ENCODE measurements at regions of chr6 and their contacts with region 1.

Region 1: GRCh38 chr6:27893059-27893835 is 18.9 kb downstream of the OR2B2 start:
- DNase-seq: peak; percentile 91
- ATAC-seq: peak; percentile 46
- H3K4me3 Mint-ChIP-seq: no peak overlapping the region
- H3K27ac Mint-ChIP-seq: peak overlapping the region; percentile 99
- H3K4me1 Mint-ChIP-seq: peaks cover 42% of the 10 kb centered on the region
- H3K27me3 Mint-ChIP-seq: no peaks in the 10 kb centered on the region; the same call in 1 of the 2 replicates
- CTCF ChIP-seq: no peak

Region 2: DNA sequence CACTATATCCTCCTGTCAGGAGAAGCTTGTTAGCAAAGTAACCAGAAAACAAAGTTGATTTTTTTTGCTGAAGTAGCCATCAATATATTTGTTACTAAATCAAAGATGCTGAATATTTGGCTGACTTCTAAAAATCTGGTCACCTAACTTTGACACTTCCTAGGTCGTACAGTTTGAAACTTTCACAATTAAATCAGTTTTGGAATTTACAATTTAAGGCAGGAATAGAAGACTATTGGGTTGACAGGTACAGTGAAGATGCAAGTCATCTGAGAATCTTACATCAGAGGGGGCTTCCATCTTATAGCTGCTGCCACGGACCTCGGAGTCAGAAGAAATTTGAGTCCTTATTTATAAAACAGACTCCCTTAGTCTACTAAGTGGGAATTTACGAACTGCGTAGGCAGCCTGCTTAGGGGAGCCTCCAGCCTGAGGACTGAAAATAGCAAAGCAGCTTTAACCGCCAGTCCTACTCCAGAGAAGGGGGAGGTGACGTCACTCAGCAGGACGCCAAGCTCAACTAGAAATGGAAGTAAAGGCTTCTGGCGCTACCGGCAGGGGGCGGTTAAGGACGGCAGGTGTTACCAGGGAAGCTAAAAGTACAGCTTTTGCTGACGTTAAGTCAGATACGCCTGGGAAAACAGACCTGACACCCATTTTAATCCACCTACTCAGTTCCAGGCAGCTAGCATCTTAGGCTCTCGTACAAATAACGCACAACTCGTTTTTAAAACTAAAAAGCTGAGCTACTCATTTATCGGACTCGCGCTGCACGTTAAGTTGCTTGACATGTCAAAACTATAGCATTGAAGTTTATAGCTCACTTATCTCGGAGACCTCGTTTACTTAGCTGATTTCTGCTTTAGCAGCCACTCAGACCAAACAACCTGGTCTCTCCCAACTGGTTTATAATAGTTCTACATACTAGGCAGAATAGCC is 1867.1 kb before region 1 on chr6:
- CTCF ChIA-PET with region 1: no interaction called
- POLR2A ChIA-PET with region 1: interaction called, 25 read pairs
- DNase-seq: peak; percentile 95
- ATAC-seq: peak; percentile 12
- H3K4me3 Mint-ChIP-seq: peak overlapping the region; percentile 92
- H3K27ac Mint-ChIP-seq: peak overlapping the region; percentile 98
- H3K4me1 Mint-ChIP-seq: peaks cover 73% of the 10 kb centered on the region
- H3K27me3 Mint-ChIP-seq: no peaks in the 10 kb centered on the region
- CTCF ChIP-seq: peak; percentile 60

Region 3: DNA sequence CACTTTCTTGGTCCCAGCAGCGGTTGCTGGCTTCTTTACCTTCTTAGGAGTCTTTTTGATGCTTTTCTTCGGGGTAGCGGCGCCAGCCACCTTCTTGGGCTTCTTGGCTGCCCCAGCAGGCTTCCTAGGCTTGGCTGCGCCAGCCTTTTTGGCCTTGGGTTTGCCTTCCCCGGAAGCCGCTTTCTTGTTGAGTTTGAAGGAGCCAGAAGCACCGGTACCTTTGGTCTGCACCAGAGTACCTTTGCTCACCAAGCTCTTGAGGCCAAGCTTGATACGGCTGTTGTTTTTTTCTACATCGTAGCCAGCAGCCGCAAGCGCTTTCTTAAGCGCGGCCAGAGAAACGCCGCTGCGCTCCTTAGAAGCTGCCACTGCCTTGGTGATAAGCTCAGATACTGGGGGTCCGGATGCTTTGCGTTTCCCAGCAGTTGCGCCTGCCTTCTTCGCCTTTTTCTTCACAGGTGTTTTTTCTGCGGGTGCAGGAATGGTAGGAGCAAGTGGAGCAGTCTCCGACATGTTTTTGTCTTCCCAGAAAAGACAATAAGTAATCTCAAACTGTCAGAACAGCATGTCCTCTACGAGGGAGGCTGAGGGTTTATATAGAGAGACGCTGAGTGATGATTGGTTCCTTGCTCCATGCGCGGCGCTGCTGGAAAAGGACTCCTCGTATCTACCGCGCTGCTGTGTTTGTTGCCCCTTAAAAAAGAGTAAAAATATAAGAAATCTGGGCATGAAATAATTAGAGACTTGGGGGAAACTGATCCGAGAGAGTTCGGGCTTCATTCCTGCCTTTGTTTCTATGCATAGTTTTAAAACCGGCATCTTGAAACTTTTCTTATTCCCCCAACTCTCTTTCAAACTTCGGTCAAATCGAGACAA is 1658.6 kb before region 1 on chr6:
- CTCF ChIA-PET with region 1: no interaction called
- POLR2A ChIA-PET with region 1: interaction called, 12 read pairs
- DNase-seq: no peak
- ATAC-seq: peak; percentile 70
- H3K4me3 Mint-ChIP-seq: peak overlapping the region; percentile 94
- H3K27ac Mint-ChIP-seq: peak overlapping the region; percentile 99
- H3K4me1 Mint-ChIP-seq: peaks cover 33% of the 10 kb centered on the region
- H3K27me3 Mint-ChIP-seq: no peaks in the 10 kb centered on the region
- CTCF ChIP-seq: no peak

Region 4: GRCh38 chr6:27138837-27139755 is 754.2 kb before region 1 on chr6:
- CTCF ChIA-PET with region 1: no interaction called
- POLR2A ChIA-PET with region 1: interaction called, 79 read pairs
- DNase-seq: peak; percentile 77
- ATAC-seq: peak; percentile 70
- H3K4me3 Mint-ChIP-seq: peak overlapping the region; percentile 97
- H3K27ac Mint-ChIP-seq: peak overlapping the region; percentile 99
- H3K4me1 Mint-ChIP-seq: peaks cover 59% of the 10 kb centered on the region
- H3K27me3 Mint-ChIP-seq: no peaks in the 10 kb centered on the region
- CTCF ChIP-seq: no peak

Region 5: GRCh38 chr6:27838058-27838944 is 54.9 kb before region 1 on chr6:
- CTCF ChIA-PET with region 1: interaction called, 8 read pairs
- POLR2A ChIA-PET with region 1: interaction called, 300 read pairs
- DNase-seq: peak; percentile 84
- ATAC-seq: peak; percentile 84
- H3K4me3 Mint-ChIP-seq: no peak overlapping the region
- H3K27ac Mint-ChIP-seq: no peak overlapping the region
- H3K4me1 Mint-ChIP-seq: peaks cover 28% of the 10 kb centered on the region
- H3K27me3 Mint-ChIP-seq: no peaks in the 10 kb centered on the region
- CTCF ChIP-seq: no peak

Region 6: DNA sequence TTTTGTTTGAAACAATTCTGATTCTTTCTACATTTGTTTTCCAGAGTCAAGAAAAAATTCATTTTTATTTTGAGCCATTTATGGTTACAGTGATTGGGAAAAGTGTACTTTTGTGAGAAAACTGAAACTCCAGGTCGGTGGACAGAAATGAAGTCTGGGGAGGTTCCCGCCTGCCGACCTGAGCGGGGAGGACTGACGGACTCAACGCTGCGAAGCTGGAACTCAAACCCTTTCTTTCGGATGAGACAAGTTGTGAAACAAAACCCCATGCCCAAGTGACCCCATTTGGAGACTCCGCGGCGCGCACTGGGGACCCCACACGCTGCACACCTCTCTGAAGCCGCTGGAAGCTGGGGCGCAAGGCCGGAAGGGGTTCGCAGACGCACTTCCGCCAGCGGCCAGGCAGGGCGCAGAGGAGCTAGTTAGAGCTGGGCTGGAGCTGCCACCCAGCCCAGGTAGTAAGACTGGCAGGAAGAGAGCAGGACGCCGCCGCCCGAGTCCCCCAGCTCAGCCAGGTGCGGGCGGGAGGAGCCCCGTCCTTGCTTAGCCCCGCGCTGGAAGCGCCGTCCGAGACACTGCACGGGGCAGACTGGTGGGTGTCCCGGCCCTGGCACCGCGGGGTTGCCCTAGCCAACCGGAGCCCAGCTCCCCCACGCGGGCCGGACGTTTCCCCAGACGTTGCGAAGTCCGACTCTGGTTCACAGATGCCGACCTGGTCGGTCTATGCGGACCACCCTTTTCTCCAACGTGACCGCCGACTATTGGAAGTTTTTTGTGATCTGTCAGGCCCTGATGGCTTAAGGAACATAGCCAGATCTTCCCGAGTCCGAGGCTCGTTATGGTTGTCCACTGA is 211.4 kb after region 1 on chr6:
- CTCF ChIA-PET with region 1: interaction called, 3 read pairs
- POLR2A ChIA-PET with region 1: interaction called, 12 read pairs
- DNase-seq: peak; percentile 92
- ATAC-seq: peak; percentile 99
- H3K4me3 Mint-ChIP-seq: peak overlapping the region; percentile 78
- H3K27ac Mint-ChIP-seq: peak overlapping the region; percentile 90; the same call in 1 of the 2 replicates
- H3K4me1 Mint-ChIP-seq: peaks cover 5% of the 10 kb centered on the region; the same call in 1 of the 2 replicates
- H3K27me3 Mint-ChIP-seq: peaks cover 58% of the 10 kb centered on the region
- CTCF ChIP-seq: no peak